Right cardiac atrium (tissue), 5 donors: ENCODE measurements at regions of chr10 and their contacts with region 1.

Region 1: DNA sequence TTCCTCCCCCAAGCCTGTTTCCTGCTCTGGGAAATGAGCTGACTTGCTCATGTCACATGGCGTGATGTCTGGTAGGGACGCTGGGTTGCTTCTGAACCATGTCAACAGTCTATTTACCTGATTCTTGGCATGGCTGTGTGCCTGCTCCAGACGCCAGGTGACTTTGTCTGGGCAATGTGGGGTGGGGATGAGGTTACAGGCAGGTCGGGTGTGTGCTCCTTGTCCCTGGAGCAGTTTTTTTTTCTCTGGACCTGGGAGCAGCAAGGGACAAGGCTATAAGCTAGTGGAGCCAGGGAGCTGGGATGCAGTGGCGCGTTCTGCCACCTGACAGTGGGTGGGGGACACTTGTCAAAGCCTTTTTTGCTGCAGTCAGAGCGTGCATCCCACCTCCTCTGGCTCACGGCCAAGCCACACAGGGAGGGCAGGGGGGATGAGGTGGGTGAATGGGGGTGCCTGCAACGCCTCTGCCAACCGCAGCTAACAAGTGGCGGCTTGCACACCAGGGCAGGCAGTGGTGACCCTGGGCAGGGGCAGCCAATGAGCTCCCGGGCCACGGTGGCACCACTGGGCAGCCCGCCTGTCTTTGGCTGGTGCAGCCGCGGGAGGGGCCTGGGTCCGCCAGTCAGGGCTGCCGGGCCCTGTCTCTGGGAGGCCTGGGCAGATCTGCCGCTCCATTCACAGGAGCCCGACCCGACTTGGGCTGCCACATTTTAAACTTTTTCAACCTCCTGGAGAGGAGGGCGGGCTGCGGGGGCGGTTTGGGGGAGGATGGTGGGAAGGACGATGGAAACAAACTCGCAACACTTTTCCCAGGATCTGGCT is 22.9 kb downstream of the DNAJB12 start:
- DNase-seq: peak; percentile 86 to 94 (median 93)
- ATAC-seq: peak; percentile 63 to 64
- H3K4me3 ChIP-seq: no peak overlapping the region
- H3K27ac ChIP-seq: peak overlapping the region; percentile 61
- H3K4me1 ChIP-seq: peaks cover 45% of the 10 kb centered on the region
- H3K27me3 ChIP-seq: no peaks in the 10 kb centered on the region

Region 2: GRCh38 chr10:71963756-71964668 is 367.8 kb before region 1 on chr10 and contains the start of gene CHST3:
- intact Hi-C with region 1: loop called in 1 of 4 experiments (anchors 10 kb)
- DNase-seq: peak; percentile 90 to 95 (median 94)
- ATAC-seq: peak; percentile 82 to 89
- H3K4me3 ChIP-seq: peak within 1 kb of the TSS; percentile 78
- H3K27ac ChIP-seq: peak within 1 kb of the TSS; percentile 90
- H3K4me1 ChIP-seq: peaks cover 10% of the 10 kb centered on the region
- H3K27me3 ChIP-seq: no peaks in the 10 kb centered on the region
- total RNA-seq, gene CHST3: 19.8 to 37.0 (median 23.3) TPM

Region 3: GRCh38 chr10:72009411-72010081 is 322.3 kb before region 1 on chr10:
- intact Hi-C with region 1: no loop called
- DNase-seq: peak; percentile 93 to 96 (median 95)
- ATAC-seq: peak; percentile 89 to 92
- H3K4me3 ChIP-seq: no peak overlapping the region
- H3K27ac ChIP-seq: peak overlapping the region; percentile 90
- H3K4me1 ChIP-seq: peaks cover 35% of the 10 kb centered on the region
- H3K27me3 ChIP-seq: no peaks in the 10 kb centered on the region

Region 4: DNA sequence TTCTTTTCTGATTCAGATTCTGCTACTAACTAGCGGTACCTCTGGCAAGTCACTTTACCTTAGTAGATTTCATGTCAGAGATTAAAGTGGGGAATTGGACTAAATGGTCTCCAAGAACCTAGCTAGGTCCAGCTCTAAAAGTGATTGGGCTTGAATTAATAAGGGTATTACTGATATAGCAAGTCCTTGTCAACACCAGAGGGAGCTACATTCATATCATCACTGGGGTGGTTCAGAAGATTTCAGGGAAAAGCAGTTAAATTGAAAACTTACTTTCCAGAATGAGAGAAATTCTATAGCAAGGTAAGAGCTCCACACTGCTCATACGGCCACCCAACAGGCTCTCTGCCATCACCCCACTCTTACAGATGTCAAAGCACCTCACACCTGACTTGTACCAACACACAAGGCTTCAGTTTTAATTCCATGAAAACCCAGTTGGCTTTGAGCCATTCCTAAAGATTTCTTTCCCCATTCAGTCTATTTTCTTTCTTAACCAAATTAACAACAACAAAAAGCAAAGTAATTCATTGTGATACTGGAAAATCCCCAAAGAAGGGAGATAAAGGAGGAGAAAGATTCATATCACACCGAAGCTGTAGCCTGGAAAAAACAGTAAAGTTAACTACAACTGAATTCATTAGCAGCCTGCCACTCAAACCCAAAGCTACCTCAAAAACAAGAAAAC is 205.5 kb before region 1 on chr10:
- intact Hi-C with region 1: loop called (anchors 5 to 10 kb)
- DNase-seq: no peak
- ATAC-seq: peak; percentile 28 to 37
- H3K4me3 ChIP-seq: no peak overlapping the region
- H3K27ac ChIP-seq: no peak overlapping the region
- H3K4me1 ChIP-seq: no peaks in the 10 kb centered on the region
- H3K27me3 ChIP-seq: no peaks in the 10 kb centered on the region

Region 5: GRCh38 chr10:72215652-72216549 is 115.9 kb before region 1 on chr10 and contains the starts of genes ANAPC16 and ASCC1:
- intact Hi-C with region 1: loop called in 2 of 4 experiments (anchors 10 kb)
- DNase-seq: peak; percentile 93 to 97 (median 97)
- ATAC-seq: peak; percentile 98 to 99
- H3K4me3 ChIP-seq: peak within 1 kb of the TSS; percentile 48
- H3K27ac ChIP-seq: peak within 1 kb of the TSS; percentile 95
- H3K4me1 ChIP-seq: no peaks in the 10 kb centered on the region
- H3K27me3 ChIP-seq: no peaks in the 10 kb centered on the region
- total RNA-seq, gene ANAPC16: 190 to 236 (median 223) TPM
- total RNA-seq, gene ASCC1: 27.6 to 37.9 (median 32.8) TPM

Region 6: GRCh38 chr10:72273410-72274212 is 58.2 kb before region 1 on chr10 and contains the start of gene DDIT4:
- intact Hi-C with region 1: loop called (anchors 2 to 10 kb)
- DNase-seq: peak; percentile 100
- ATAC-seq: peak; percentile 88 to 93
- H3K4me3 ChIP-seq: peak within 1 kb of the TSS; percentile 68
- H3K27ac ChIP-seq: peak within 1 kb of the TSS; percentile 95
- H3K4me1 ChIP-seq: peaks cover 6% of the 10 kb centered on the region
- H3K27me3 ChIP-seq: no peaks in the 10 kb centered on the region
- total RNA-seq, gene DDIT4: 33.0 to 113 (median 76.5) TPM